Esophagus squamous epithelium (tissue), 5 donors: ENCODE measurements at regions of chr21 and their contacts with region 1.

Region 1: GRCh38 chr21:41460578-41461527 is 34.8 kb downstream of the MX1 start:
- DNase-seq: no peak
- H3K4me3 ChIP-seq: no peak overlapping the region
- H3K27ac ChIP-seq: peak overlapping the region in 3 of 4 donors; percentile 41 to 63 (median 50)
- H3K4me1 ChIP-seq: peaks cover 0 to 30% (median 11%) of the 10 kb centered on the region in 3 donors
- H3K27me3 ChIP-seq: no peaks in the 10 kb centered on the region
- CTCF ChIP-seq: peak; percentile 67 to 84 (median 76)
- POLR2A ChIP-seq: no peak

Region 2: GRCh38 chr21:41283211-41283818 is 177.5 kb before region 1 on chr21:
- intact Hi-C with region 1: loop called (anchors 10 kb)
- DNase-seq: no peak
- H3K4me3 ChIP-seq: no peak overlapping the region
- H3K27ac ChIP-seq: no peak overlapping the region
- H3K4me1 ChIP-seq: peaks cover 0 to 7% (median 0%) of the 10 kb centered on the region in 3 donors
- H3K27me3 ChIP-seq: peaks cover 0 to 6% (median 0%) of the 10 kb centered on the region in 4 donors
- CTCF ChIP-seq: peak; percentile 51 to 90 (median 74)
- POLR2A ChIP-seq: no peak

Region 3: DNA sequence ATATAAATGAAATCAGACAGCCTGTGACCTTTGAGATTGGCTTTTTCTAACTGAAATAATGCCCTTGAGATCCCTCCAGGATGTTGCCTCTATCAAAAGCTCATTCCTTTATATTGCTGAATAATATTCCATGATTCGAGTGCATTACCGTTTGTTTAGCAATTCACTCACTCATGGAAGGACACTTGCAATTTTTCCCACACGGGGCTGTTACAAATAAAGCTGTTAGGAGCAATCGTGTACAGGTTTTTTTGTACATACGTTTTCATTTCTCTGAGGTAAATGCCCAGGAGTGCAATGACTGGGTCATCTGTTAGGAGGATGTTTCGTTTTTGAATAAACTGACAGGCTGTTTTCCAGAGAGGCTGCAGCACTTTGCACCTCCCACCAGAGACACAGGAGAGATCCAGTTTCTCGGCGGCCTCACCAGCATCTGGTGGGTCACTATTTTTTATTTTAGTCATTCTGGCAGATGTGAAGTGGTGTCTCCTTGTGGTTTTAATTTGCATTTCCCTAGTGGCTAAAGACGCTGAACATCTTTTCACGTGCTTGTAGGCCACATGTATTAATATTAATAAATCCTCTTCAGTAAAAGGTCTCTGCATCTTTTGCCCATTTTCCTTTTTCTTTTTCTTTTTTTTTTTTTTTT is 407.3 kb after region 1 on chr21:
- intact Hi-C with region 1: no loop called
- DNase-seq: no peak
- H3K4me3 ChIP-seq: no peak overlapping the region
- H3K27ac ChIP-seq: no peak overlapping the region
- H3K4me1 ChIP-seq: peaks cover 0 to 4% (median 2%) of the 10 kb centered on the region in 3 donors
- H3K27me3 ChIP-seq: no peaks in the 10 kb centered on the region
- CTCF ChIP-seq: no peak
- POLR2A ChIP-seq: no peak